ENCODE measurements at regions of chr13 and their contacts with region 1.

Region 1: GRCh38 chr13:112942689-112943308 is 26.2 kb upstream of the MCF2L start:
- DNase-seq: peak; percentile 92 to 97 (median 95)
- ATAC-seq: peak; percentile 98
- H3K4me3 ChIP-seq: peak overlapping the region; percentile 38 to 52
- H3K27ac ChIP-seq: peak overlapping the region in 1 of 2 donors; percentile 73
- H3K4me1 ChIP-seq: peaks cover 3 to 18% of the 10 kb centered on the region in 2 donors
- H3K27me3 ChIP-seq: peaks cover 0 to 45% of the 10 kb centered on the region in 2 donors
- CTCF ChIP-seq: peak; percentile 97 to 98

Region 2: GRCh38 chr13:113029487-113030258 is 86.9 kb after region 1 on chr13:
- intact Hi-C with region 1: loop called in 1 of 2 experiments (anchors 10 kb)
- DNase-seq: peak in 2 of 4 donors; percentile 40 to 84
- ATAC-seq: peak; percentile 85
- H3K4me3 ChIP-seq: no peak overlapping the region
- H3K27ac ChIP-seq: no peak overlapping the region
- H3K4me1 ChIP-seq: no peaks in the 10 kb centered on the region
- H3K27me3 ChIP-seq: no peaks in the 10 kb centered on the region
- CTCF ChIP-seq: peak; percentile 75 to 79

Region 3: DNA sequence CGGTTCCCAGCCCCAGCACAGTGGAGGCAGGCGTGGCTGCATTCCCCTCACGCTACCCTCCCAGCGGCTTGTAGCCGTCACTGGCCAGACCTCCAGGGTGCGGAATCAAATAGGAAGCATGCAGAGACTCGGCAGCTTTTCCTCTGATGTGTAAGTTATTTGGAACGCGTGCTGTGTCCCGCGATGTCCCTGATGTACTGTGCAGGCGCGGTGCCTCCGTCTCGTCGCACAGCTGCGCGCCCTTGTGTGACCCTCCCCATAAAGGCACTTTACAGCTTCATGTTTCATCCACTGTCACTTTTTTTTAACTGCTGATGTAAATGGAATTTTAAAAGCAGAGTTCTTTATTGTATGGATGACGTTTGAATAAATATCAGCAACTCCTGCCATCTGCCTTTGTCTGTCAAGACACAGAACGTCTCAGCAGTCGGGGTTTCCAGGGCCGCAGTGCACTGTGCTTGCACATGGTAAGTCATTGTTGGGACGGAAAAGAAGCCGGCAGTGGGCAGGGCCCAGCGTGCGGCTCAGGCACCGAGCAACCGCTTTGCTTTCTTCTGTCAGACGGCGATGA is 155.4 kb after region 1 on chr13:
- intact Hi-C with region 1: loop called in 1 of 2 experiments (anchors 5 kb)
- DNase-seq: peak in 2 of 4 donors; percentile 25 to 76
- ATAC-seq: peak; percentile 11
- H3K4me3 ChIP-seq: no peak overlapping the region
- H3K27ac ChIP-seq: no peak overlapping the region
- H3K4me1 ChIP-seq: no peaks in the 10 kb centered on the region
- H3K27me3 ChIP-seq: peaks cover 0 to 6% of the 10 kb centered on the region in 2 donors
- CTCF ChIP-seq: no peak

Region 4: DNA sequence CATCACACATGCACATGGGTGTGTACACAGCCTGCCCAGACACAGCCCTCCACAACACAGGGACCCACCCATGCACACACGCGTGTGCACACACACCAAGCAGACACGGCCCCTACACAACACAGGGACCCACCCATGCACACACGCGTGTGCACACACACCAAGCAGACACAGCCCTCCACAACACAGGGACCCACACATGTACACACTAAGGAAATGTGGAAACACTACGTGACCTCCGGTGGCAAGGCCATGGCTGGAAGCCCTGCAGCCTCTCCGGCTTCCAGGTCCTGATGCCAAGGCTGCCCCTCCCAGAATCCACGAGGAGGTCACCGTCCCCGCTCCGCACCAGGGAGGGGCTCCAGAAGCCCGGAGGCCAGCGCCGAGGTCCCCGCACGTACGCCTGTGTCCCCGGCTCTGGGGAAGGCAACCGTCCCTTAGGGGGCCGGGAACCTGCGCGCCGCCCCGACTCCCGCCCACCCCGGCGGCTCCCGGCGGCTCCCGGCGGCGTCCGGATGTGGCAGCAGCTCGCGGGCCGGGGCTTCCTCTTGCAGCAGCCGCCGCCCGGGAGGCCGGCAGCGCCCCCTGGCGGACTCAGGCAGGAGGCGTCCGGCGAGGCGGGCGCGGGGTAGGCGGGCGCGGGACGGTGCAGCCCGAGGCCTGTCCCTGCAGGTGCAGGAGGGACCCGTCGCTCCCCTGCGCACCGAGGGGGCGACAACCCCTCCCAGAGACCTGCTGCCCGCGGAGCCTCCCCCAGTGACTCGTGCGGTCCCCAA is 451.0 kb after region 1 on chr13:
- intact Hi-C with region 1: loop called in 1 of 2 experiments (anchors 10 kb)
- DNase-seq: peak; percentile 66 to 97 (median 81)
- ATAC-seq: peak; percentile 97
- H3K4me3 ChIP-seq: peak overlapping the region; percentile 50 to 66
- H3K27ac ChIP-seq: peak overlapping the region in 1 of 2 donors; percentile 16
- H3K4me1 ChIP-seq: peaks cover 3 to 12% of the 10 kb centered on the region in 2 donors
- H3K27me3 ChIP-seq: no peaks in the 10 kb centered on the region
- CTCF ChIP-seq: peak; percentile 91 to 96